Posterior vena cava (tissue), 2 donors: ENCODE measurements at regions of chr6 and their contacts with region 1.

Region 1: GRCh38 chr6:34414999-34415858 is 10.6 kb downstream of the RPS10 start:
- DNase-seq: peak; percentile 54

Region 2: GRCh38 chr6:32424589-32425300 is 1990.5 kb before region 1 on chr6:
- intact Hi-C with region 1: no loop called
- DNase-seq: no peak

Region 3: GRCh38 chr6:33375143-33375671 is 1040.0 kb before region 1 on chr6:
- intact Hi-C with region 1: no loop called
- DNase-seq: peak; percentile 82

Region 4: GRCh38 chr6:34196126-34196830 is 219.0 kb before region 1 on chr6:
- intact Hi-C with region 1: loop called (anchors 2 to 5 kb)
- DNase-seq: peak; percentile 97

Region 5: GRCh38 chr6:34248727-34249551 is 166.3 kb before region 1 on chr6 and contains the start of gene SMIM29:
- intact Hi-C with region 1: loop called in 1 of 2 experiments (anchors 5 kb)
- DNase-seq: peak; percentile 99
- total RNA-seq, gene SMIM29: 19.0 to 24.5 TPM